ENCODE measurements at regions of chr3 and their contacts with region 1.

Region 1: DNA sequence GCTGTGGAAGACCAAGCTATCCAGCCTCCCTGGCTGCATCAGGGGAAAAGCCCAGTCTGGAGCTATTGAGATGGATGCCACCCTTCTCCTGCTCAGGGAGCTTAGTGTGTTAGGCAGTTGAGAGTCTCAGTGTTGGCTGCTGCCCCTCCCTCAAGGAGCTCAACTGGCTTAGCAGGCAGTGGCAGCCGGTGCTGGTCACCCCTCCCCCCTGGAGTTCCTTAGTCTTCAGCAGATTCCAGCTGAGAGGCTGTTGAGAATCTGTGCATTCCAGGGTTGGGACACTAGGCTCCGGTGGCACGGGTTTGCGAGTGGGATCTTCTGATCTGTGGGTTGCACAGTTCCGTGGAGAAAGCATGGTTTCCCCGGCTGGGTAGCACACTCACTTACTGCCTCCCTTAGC is 883.8 kb downstream of the NSUN3 start:
- DNase-seq: no peak
- ATAC-seq: no peak

Region 2: GRCh38 chr3:94799420-94800060 is 147.1 kb before region 1 on chr3:
- intact Hi-C with region 1: loop called in 1 of 2 experiments (anchors 10 kb)
- DNase-seq: no peak
- ATAC-seq: no peak

Region 3: GRCh38 chr3:94961446-94962080 is 14.9 kb after region 1 on chr3:
- intact Hi-C with region 1: no loop called
- DNase-seq: no peak
- ATAC-seq: no peak